MCF 10A (cell line): ENCODE measurements at regions of chr2 and their contacts with region 1.

Region 1: DNA sequence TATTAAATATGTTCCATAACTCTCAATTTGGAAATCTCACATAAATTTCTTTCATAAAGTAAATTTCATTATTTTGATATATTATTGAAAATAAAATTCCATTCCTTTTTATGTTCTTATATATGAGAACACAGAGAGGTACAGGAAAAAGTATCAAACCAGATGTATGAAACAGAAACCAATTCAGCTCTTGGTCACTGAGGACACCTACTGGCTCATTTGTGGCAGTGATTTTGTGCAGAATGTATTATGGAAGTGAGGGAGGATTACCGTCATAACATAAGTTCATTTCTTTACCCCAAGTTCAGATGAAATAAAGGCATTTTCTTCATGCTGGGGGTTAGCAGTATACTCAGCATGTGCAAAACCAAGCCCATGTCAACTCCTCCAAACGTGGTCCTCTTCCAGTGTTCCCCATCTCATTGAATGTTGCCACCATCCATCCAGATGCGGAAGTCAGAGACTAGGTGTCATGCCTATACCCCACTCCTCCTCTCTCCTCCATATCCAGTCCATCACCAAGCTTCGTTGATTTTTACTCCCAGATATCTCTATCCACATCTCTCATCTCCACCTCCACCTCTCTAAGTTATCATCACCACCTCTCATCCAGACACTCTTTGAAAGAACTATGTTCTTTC is 41.7 kb upstream of the MALL start:
- DNase-seq: peak; percentile 80
- H3K4me3 Mint-ChIP-seq: no peak overlapping the region
- H3K27ac Mint-ChIP-seq: no peak overlapping the region
- H3K4me1 Mint-ChIP-seq: peaks cover 15% of the 10 kb centered on the region
- H3K27me3 Mint-ChIP-seq: no peaks in the 10 kb centered on the region
- CTCF ChIP-seq: peak; percentile 81

Region 2: GRCh38 chr2:109438773-109439389 is 718.4 kb before region 1 on chr2:
- CTCF ChIA-PET with region 1: no interaction called
- POLR2A ChIA-PET with region 1: no interaction called
- intact Hi-C with region 1: no loop called
- DNase-seq: peak; percentile 8
- H3K4me3 Mint-ChIP-seq: no peak overlapping the region
- H3K27ac Mint-ChIP-seq: no peak overlapping the region
- H3K4me1 Mint-ChIP-seq: no peaks in the 10 kb centered on the region
- H3K27me3 Mint-ChIP-seq: no peaks in the 10 kb centered on the region
- CTCF ChIP-seq: no peak

Region 3: GRCh38 chr2:110105608-110106467 is 51.4 kb before region 1 on chr2:
- CTCF ChIA-PET with region 1: interaction called, 10 read pairs
- POLR2A ChIA-PET with region 1: no interaction called
- intact Hi-C with region 1: no loop called
- DNase-seq: peak; percentile 84
- H3K4me3 Mint-ChIP-seq: peak overlapping the region; percentile 41
- H3K27ac Mint-ChIP-seq: peak overlapping the region; percentile 83
- H3K4me1 Mint-ChIP-seq: peaks cover 47% of the 10 kb centered on the region
- H3K27me3 Mint-ChIP-seq: no peaks in the 10 kb centered on the region
- CTCF ChIP-seq: no peak

Region 4: DNA sequence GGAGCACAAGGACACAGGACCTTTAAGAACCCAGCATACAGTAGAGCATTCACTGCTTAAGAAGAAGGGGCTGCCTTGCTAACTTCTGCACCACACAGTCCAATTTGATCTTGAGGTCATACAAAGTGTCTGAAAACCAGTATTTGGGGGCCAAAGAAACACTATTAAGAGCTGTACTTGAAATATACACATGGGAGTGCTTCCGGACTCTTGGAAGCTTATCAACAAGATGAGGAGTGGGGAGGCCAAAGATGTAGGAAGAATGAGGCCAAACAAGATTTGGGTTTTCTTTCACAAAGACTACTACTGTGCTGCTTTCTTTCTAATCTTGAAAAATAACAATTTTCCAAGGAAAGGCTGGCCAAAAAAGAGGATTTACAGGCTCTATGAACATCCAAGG is 16.9 kb before region 1 on chr2:
- CTCF ChIA-PET with region 1: interaction called, 10 read pairs
- POLR2A ChIA-PET with region 1: no interaction called
- intact Hi-C with region 1: no loop called
- DNase-seq: no peak
- H3K4me3 Mint-ChIP-seq: no peak overlapping the region
- H3K27ac Mint-ChIP-seq: no peak overlapping the region
- H3K4me1 Mint-ChIP-seq: no peaks in the 10 kb centered on the region
- H3K27me3 Mint-ChIP-seq: no peaks in the 10 kb centered on the region
- CTCF ChIP-seq: no peak

Region 5: DNA sequence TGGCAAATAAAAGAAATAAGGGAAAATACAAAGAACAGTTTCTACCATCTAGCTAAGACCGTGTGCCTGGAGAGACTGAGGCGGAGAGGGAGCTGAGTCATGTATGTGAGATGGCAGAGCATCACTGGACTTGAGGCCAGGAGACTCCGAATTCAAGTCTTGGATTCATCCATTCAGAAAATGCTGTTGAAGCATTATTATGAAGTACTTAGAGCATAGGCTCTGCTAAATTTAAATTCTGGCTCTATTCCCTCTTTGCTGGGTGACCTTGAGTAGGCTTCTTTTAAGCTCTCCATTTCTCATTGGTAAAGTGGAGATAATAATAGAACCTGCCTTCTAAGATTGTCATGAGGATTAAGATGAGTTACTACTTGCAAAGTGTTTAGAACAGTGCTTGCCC is 12.8 kb after region 1 on chr2:
- CTCF ChIA-PET with region 1: interaction called, 12 read pairs
- POLR2A ChIA-PET with region 1: interaction called, 9 read pairs
- intact Hi-C with region 1: no loop called
- DNase-seq: no peak
- H3K4me3 Mint-ChIP-seq: no peak overlapping the region
- H3K27ac Mint-ChIP-seq: no peak overlapping the region
- H3K4me1 Mint-ChIP-seq: peaks cover 7% of the 10 kb centered on the region
- H3K27me3 Mint-ChIP-seq: no peaks in the 10 kb centered on the region
- CTCF ChIP-seq: no peak

Region 6: DNA sequence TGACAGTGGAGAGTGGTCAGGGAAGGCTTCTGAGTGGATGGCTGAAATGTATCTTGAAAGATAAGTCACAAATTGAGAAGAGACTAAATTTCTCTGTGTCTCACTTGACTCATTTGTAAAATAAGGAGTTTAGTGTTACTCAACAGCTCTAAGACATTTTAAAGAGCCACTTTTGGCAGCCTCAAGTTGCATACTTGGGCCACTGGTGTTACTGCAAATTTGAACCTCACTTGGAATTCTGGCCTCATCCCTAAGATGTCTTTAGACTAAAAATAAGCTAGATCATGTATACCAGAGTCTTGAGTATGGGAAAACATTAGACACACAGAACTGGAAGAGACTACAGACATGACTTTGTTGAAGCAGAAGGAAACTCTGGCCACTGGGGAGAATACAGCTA is 59.5 kb after region 1 on chr2:
- CTCF ChIA-PET with region 1: no interaction called
- POLR2A ChIA-PET with region 1: no interaction called
- intact Hi-C with region 1: no loop called
- DNase-seq: no peak
- H3K4me3 Mint-ChIP-seq: no peak overlapping the region
- H3K27ac Mint-ChIP-seq: no peak overlapping the region
- H3K4me1 Mint-ChIP-seq: no peaks in the 10 kb centered on the region
- H3K27me3 Mint-ChIP-seq: peaks cover 56% of the 10 kb centered on the region
- CTCF ChIP-seq: no peak